Gastrocnemius medialis (tissue), 4 donors: ENCODE measurements at regions of chr2 and their contacts with region 1.

Region 1: GRCh38 chr2:179422037-179422643 is 157.5 kb upstream of the SESTD1 start:
- DNase-seq: peak; percentile 48 to 65
- ATAC-seq: peak; percentile 54 to 81
- H3K4me3 ChIP-seq: no peak overlapping the region
- H3K27ac ChIP-seq: no peak overlapping the region
- H3K4me1 ChIP-seq: no peaks in the 10 kb centered on the region
- H3K27me3 ChIP-seq: no peaks in the 10 kb centered on the region
- CTCF ChIP-seq: peak; percentile 45 to 75 (median 71)
- POLR2A ChIP-seq: no peak

Region 2: GRCh38 chr2:179218848-179219594 is 203.1 kb before region 1 on chr2:
- in situ Hi-C with region 1: loop called in 1 of 4 experiments (anchors 25 kb)
- intact Hi-C with region 1: no loop called
- DNase-seq: peak; percentile 53 to 74
- ATAC-seq: peak; percentile 97 to 98
- H3K4me3 ChIP-seq: no peak overlapping the region
- H3K27ac ChIP-seq: peak overlapping the region in 2 of 4 donors; percentile 5 to 17
- H3K4me1 ChIP-seq: peaks cover 5 to 12% of the 10 kb centered on the region in 2 donors
- H3K27me3 ChIP-seq: no peaks in the 10 kb centered on the region
- CTCF ChIP-seq: peak; percentile 65 to 88 (median 69)
- POLR2A ChIP-seq: no peak

Region 3: GRCh38 chr2:179354739-179355537 is 67.2 kb before region 1 on chr2:
- in situ Hi-C with region 1: no loop called
- intact Hi-C with region 1: no loop called
- DNase-seq: no peak
- ATAC-seq: no peak
- H3K4me3 ChIP-seq: no peak overlapping the region
- H3K27ac ChIP-seq: no peak overlapping the region
- H3K4me1 ChIP-seq: peaks cover 0 to 3% of the 10 kb centered on the region in 2 donors
- H3K27me3 ChIP-seq: no peaks in the 10 kb centered on the region
- CTCF ChIP-seq: peak in 1 of 5 experiments; percentile 12
- POLR2A ChIP-seq: no peak

Region 4: DNA sequence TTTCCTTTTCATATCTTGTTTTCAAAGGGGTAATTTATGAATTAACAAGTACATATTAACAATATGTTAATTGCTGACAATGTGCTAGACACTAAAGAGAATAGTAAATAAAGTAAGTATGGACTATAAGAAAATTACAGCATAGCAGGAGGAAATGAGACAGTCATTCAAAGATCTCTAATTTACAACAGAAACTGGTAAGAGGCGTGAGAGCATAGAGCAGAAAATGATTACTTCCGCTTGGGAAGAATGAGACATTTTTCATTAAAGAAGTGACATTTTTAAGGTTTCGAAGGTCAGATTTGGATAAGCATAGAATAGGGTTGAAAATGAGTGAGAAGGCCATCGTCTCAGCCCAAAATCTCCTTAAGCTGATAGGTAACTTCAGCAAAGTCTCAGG is 26.9 kb after region 1 on chr2:
- in situ Hi-C with region 1: no loop called
- intact Hi-C with region 1: no loop called
- DNase-seq: no peak
- ATAC-seq: no peak
- H3K4me3 ChIP-seq: no peak overlapping the region
- H3K27ac ChIP-seq: no peak overlapping the region
- H3K4me1 ChIP-seq: peaks cover 0 to 7% of the 10 kb centered on the region in 2 donors
- H3K27me3 ChIP-seq: no peaks in the 10 kb centered on the region
- CTCF ChIP-seq: no peak
- POLR2A ChIP-seq: no peak

Region 5: DNA sequence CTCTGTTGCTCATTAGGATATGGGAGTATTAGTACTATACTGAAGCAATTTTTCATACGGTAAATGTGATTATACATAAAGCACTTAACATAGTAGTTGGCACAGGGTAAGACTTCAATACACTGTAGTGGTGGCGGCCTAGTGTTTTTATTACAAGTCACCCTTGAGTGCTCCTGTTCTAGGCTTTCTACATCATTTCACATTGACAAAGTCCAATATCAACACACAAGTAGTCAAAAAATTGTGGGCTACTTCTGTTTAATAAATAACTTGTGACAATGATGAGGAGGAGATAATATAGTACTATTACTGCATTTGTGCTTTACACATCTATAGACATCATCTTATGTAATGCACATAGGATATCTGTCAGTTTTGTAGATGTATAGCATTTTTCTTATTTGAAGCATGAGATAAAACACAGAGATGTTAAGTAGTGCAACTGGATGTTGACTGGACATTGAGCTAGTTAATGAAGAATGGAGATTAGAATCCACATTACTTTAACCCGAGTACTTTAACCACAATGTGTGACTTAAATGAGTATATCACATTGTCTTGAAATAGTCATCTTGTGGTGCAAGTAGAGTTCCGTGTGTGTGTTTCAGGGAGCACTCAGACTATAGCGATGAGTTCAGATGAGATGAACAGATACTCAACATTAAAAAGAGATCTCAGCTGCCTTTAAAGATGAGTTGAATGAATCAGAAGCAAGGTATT is 304.5 kb after region 1 on chr2:
- in situ Hi-C with region 1: loop called in 1 of 4 experiments (anchors 10 kb)
- intact Hi-C with region 1: no loop called
- DNase-seq: no peak
- ATAC-seq: no peak
- H3K4me3 ChIP-seq: no peak overlapping the region
- H3K27ac ChIP-seq: no peak overlapping the region
- H3K4me1 ChIP-seq: no peaks in the 10 kb centered on the region
- H3K27me3 ChIP-seq: no peaks in the 10 kb centered on the region
- CTCF ChIP-seq: no peak
- POLR2A ChIP-seq: no peak

Region 6: GRCh38 chr2:179741317-179741716 is 319.2 kb after region 1 on chr2:
- in situ Hi-C with region 1: loop called in 2 of 4 experiments (anchors 5 to 10 kb)
- intact Hi-C with region 1: no loop called
- DNase-seq: peak; percentile 10 to 43
- ATAC-seq: peak; percentile 94 to 99
- H3K4me3 ChIP-seq: no peak overlapping the region
- H3K27ac ChIP-seq: peak overlapping the region in 3 of 4 donors; percentile 42 to 50 (median 49)
- H3K4me1 ChIP-seq: peaks cover 0 to 18% of the 10 kb centered on the region in 2 donors
- H3K27me3 ChIP-seq: no peaks in the 10 kb centered on the region
- CTCF ChIP-seq: no peak
- POLR2A ChIP-seq: no peak